Activated CD4-positive, alpha-beta T cell treated with anti-CD3 and anti-CD28 coated beads for 36 hours (primary cell): ENCODE measurements at regions of chr1 and their contacts with region 1.

Region 1: GRCh38 chr1:113928941-113929749 is at the start of gene HIPK1:
- DNase-seq: peak; percentile 96
- ATAC-seq: peak; percentile 66
- H3K4me3 Mint-ChIP-seq: peak within 1 kb of the TSS; percentile 84
- H3K27ac Mint-ChIP-seq: peak within 1 kb of the TSS; percentile 99
- H3K4me1 Mint-ChIP-seq: peaks cover 41% of the 10 kb centered on the region
- H3K27me3 Mint-ChIP-seq: no peaks in the 10 kb centered on the region
- total RNA-seq, gene HIPK1: 42.2 to 50.3 TPM

Region 2: GRCh38 chr1:112955781-112956543 is 973.2 kb before region 1 on chr1 and contains the start of gene SLC16A1:
- CTCF ChIA-PET with region 1: no interaction called
- POLR2A ChIA-PET with region 1: no interaction called
- intact Hi-C with region 1: loop called in 1 of 2 experiments (anchors 1 kb)
- DNase-seq: peak; percentile 96
- ATAC-seq: peak; percentile 75
- H3K4me3 Mint-ChIP-seq: peak within 1 kb of the TSS; percentile 97
- H3K27ac Mint-ChIP-seq: peak within 1 kb of the TSS; percentile 100
- H3K4me1 Mint-ChIP-seq: peaks cover 56% of the 10 kb centered on the region
- H3K27me3 Mint-ChIP-seq: no peaks in the 10 kb centered on the region
- total RNA-seq, gene SLC16A1: 70.0 to 70.4 TPM

Region 3: GRCh38 chr1:113759333-113760101 is 169.6 kb before region 1 on chr1 and contains the start of gene PHTF1:
- CTCF ChIA-PET with region 1: no interaction called
- POLR2A ChIA-PET with region 1: interaction called, 7 read pairs
- intact Hi-C with region 1: loop called in 1 of 2 experiments (anchors 2 kb)
- DNase-seq: peak; percentile 77
- ATAC-seq: peak; percentile 81
- H3K4me3 Mint-ChIP-seq: peak within 1 kb of the TSS; percentile 81
- H3K27ac Mint-ChIP-seq: peak within 1 kb of the TSS; percentile 94
- H3K4me1 Mint-ChIP-seq: peaks cover 13% of the 10 kb centered on the region
- H3K27me3 Mint-ChIP-seq: no peaks in the 10 kb centered on the region
- total RNA-seq, gene PHTF1: 11.3 to 12.2 TPM

Region 4: DNA sequence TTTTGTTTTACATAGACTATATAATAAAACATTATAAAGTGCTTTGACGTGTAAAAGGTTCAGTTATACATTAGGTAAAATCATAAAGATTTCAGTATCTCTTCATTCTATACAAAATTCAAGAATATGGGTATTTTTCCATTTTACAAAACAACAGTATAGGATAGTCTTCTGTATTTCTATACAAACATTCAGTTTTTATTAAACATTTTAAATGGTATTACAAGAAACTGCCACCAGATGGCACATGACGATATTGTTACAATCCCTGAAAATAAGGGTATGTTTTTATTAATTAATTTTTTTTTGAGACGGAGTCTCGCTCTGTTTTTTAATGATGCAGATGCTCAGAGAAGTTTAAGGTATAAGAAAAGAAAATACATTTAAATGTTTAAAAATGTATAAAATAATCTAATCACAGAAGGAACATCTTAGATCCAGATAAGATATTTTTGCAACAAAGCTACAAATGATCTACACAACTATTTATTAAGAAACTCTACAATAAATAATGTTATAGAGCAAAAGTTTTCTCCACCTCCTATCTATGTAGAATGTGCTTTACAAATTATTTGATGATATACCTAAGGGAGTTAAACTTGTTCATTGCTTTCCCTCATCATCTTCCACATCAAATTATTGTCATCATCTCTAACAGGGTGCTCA is 93.4 kb before region 1 on chr1:
- CTCF ChIA-PET with region 1: interaction called, 27 read pairs
- POLR2A ChIA-PET with region 1: interaction called, 4 read pairs
- intact Hi-C with region 1: loop called (anchors 1 kb)
- DNase-seq: no peak
- ATAC-seq: no peak
- H3K4me3 Mint-ChIP-seq: no peak overlapping the region
- H3K27ac Mint-ChIP-seq: peak overlapping the region; percentile 55
- H3K4me1 Mint-ChIP-seq: peaks cover 4% of the 10 kb centered on the region
- H3K27me3 Mint-ChIP-seq: no peaks in the 10 kb centered on the region

Region 5: DNA sequence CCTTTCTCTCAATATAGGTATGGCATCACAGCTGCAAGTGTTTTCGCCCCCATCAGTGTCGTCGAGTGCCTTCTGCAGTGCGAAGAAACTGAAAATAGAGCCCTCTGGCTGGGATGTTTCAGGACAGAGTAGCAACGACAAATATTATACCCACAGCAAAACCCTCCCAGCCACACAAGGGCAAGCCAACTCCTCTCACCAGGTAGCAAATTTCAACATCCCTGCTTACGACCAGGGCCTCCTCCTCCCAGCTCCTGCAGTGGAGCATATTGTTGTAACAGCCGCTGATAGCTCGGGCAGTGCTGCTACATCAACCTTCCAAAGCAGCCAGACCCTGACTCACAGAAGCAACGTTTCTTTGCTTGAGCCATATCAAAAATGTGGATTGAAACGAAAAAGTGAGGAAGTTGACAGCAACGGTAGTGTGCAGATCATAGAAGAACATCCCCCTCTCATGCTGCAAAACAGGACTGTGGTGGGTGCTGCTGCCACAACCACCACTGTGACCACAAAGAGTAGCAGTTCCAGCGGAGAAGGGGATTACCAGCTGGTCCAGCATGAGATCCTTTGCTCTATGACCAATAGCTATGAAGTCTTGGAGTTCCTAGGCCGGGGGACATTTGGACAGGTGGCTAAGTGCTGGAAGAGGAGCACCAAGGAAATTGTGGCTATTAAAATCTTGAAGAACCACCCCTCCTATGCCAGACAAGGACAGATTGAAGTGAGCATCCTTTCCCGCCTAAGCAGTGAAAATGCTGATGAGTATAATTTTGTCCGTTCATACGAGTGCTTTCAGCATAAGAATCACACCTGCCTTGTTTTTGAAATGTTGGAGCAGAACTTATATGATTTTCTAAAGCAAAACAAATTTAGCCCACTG is 11.5 kb after region 1 on chr1:
- CTCF ChIA-PET with region 1: interaction called, 155 read pairs
- POLR2A ChIA-PET with region 1: interaction called, 28 read pairs
- intact Hi-C with region 1: loop called in 1 of 2 experiments (anchors 1 kb)
- DNase-seq: peak; percentile 72
- ATAC-seq: peak; percentile 61
- H3K4me3 Mint-ChIP-seq: peak overlapping the region; percentile 59
- H3K27ac Mint-ChIP-seq: peak overlapping the region; percentile 90
- H3K4me1 Mint-ChIP-seq: peaks cover 73% of the 10 kb centered on the region
- H3K27me3 Mint-ChIP-seq: no peaks in the 10 kb centered on the region

Region 6: DNA sequence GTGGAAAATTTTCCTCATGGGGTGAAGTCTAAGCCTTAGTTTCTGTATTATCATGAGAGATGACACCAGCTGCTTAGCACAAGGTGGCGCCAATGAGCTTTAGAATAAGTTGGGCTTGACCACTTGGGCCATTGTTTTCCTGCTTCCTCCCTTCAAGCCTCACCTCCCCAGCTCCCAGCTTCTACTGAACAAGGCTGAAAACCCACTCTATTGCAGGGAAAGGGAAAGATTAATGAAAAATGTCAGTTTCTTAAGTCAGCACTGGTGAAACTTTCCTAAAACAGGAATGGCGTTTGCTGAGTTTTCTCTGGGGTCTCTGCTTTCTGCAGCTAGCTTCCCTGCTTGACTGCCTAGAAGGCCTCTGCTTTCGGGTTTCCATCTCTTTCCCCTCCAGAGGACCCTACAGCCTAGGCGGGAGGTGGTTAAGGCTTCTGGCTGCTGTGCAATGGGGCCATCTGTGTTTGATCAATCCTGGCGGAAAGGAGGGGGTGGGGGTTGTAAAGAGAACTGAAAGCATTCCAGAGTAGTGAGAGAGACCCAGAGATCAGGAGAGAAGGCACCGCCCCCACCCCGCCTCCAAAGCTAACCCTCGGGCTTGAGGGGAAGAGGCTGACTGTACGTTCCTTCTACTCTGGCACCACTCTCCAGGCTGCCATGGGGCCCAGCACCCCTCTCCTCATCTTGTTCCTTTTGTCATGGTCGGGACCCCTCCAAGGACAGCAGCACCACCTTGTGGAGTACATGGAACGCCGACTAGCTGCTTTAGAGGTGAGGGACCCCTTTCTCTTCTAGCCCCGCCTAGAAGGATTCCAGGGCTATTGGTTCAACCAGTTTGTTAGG is 49.9 kb after region 1 on chr1 and contains the start of gene OLFML3:
- CTCF ChIA-PET with region 1: interaction called, 5 read pairs
- POLR2A ChIA-PET with region 1: interaction called, 3 read pairs
- intact Hi-C with region 1: loop called (anchors 5 kb)
- DNase-seq: peak; percentile 79
- ATAC-seq: peak; percentile 51
- H3K4me3 Mint-ChIP-seq: no peak within 1 kb of the TSS
- H3K27ac Mint-ChIP-seq: no peak within 1 kb of the TSS
- H3K4me1 Mint-ChIP-seq: peaks cover 42% of the 10 kb centered on the region
- H3K27me3 Mint-ChIP-seq: no peaks in the 10 kb centered on the region
- total RNA-seq, gene OLFML3: 0.11 TPM in 1 of 2 experiments, not detected in the other